Lower lobe of right lung (tissue), 2 donors: ENCODE measurements at regions of chr10 and their contacts with region 1.

Region 1: DNA sequence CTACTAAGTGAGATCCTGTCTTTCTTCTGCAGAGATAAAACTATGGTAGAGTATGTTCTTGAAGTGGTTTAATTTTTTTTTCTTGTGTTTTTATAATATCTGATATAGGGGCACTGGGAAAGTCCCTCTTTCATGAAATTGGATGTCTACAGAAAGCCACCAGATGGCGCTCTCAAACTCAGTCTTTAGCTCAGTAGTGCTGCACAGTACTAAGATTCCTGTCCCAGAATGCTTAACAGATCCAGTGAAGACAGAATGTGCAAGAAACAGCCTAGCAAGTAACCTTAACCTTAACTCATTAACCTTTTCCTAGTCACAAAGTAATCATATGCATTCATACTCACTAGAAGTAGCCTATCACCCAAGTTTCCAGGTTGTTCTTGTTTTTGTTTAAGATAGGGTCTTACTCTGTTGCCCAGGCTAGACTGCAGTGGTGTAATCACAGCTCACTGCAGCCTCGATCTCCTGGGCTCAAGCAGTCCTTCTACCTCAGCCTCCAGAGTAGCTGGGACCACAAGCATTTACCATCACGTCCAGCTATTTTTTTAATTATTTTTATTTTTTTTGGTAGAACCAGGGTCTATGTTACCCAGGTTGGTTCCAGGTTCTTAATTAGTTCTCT is 56.7 kb downstream of the IDE start:
- DNase-seq: no peak
- ATAC-seq: peak; percentile 81 to 91
- H3K4me3 ChIP-seq: no peak overlapping the region
- H3K27ac ChIP-seq: no peak overlapping the region
- H3K4me1 ChIP-seq: no peaks in the 10 kb centered on the region
- H3K27me3 ChIP-seq: no peaks in the 10 kb centered on the region
- CTCF ChIP-seq: peak; percentile 77

Region 2: DNA sequence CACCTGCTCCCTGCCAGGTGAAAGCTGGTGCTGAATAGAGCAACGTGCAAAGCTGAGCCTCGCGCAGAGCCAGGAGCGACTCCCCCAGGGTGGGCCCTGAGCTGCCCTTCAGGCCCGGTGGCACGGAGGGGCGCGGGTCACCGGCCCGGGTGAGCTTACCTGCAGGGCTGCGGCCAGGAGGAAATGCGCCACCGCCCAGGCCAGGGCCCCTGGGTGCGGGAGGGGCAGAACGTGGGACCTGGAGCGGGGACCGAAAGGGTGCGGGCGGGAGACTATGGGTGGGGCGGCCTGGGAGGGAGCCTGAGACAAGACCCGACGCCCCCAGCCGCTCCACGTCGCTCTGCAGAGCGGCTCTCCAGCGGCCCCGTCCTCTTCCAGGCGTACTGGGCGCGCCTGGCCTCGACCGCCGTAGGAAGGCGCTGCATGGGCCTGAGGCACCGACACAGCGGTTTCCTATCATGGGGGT is 471.5 kb before region 1 on chr10:
- intact Hi-C with region 1: no loop called
- DNase-seq: no peak
- ATAC-seq: peak in 1 of 2 donors; percentile 38
- H3K4me3 ChIP-seq: no peak overlapping the region
- H3K27ac ChIP-seq: no peak overlapping the region
- H3K4me1 ChIP-seq: no peaks in the 10 kb centered on the region
- H3K27me3 ChIP-seq: no peaks in the 10 kb centered on the region
- CTCF ChIP-seq: no peak

Region 3: GRCh38 chr10:92573798-92574547 is 56.8 kb after region 1 on chr10 and contains the start of gene IDE:
- intact Hi-C with region 1: loop called (anchors 5 kb)
- DNase-seq: peak; percentile 92
- ATAC-seq: peak; percentile 97
- H3K4me3 ChIP-seq: peak within 1 kb of the TSS; percentile 97
- H3K27ac ChIP-seq: peak within 1 kb of the TSS; percentile 92
- H3K4me1 ChIP-seq: peaks cover 28% of the 10 kb centered on the region
- H3K27me3 ChIP-seq: no peaks in the 10 kb centered on the region
- CTCF ChIP-seq: peak; percentile 82
- total RNA-seq, gene IDE: 26.3 TPM